GM10248 (cell line): ENCODE measurements at regions of chr14 and their contacts with region 1.

Region 1: DNA sequence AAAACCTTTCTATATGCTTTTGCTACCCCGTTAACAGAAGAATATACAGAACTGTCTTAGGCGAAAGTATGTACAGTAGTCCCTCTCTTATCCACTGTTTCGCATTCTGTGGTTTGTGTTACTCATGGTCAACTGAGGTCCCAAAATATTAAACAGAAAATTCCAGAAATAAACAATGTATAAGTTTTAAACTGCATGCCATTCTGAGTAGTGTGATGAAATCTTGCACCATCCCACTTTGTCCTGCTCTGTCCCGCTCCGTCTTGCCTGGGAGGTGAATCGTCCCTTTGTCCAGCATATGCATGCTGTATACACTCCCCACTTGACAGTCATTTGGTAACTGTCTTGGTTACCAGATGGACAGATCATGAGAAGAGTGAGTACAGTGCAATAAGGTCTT is 70.1 kb upstream of the STRN3 start:
- DNase-seq: no peak
- CTCF ChIP-seq: no peak

Region 2: GRCh38 chr14:31084385-31084784 is 11.9 kb before region 1 on chr14:
- CTCF ChIA-PET with region 1: interaction called, 11 read pairs
- POLR2A ChIA-PET with region 1: no interaction called
- DNase-seq: peak; percentile 47
- CTCF ChIP-seq: no peak